Activated CD4-positive, alpha-beta T cell treated with anti-CD3 and anti-CD28 coated beads, Interleukin-2, amount 10 ng/mL, durations not matched to agents 7 days and 5 days (primary cell): ENCODE measurements at regions of chr5 and their contacts with region 1.

Region 1: GRCh38 chr5:14685757-14686156 is 21.2 kb downstream of the OTULIN start:
- DNase-seq: peak; percentile 59
- H3K4me3 Mint-ChIP-seq: no peak overlapping the region
- H3K27ac Mint-ChIP-seq: peak overlapping the region; percentile 52
- H3K4me1 Mint-ChIP-seq: peaks cover 18% of the 10 kb centered on the region
- H3K27me3 Mint-ChIP-seq: no peaks in the 10 kb centered on the region

Region 2: DNA sequence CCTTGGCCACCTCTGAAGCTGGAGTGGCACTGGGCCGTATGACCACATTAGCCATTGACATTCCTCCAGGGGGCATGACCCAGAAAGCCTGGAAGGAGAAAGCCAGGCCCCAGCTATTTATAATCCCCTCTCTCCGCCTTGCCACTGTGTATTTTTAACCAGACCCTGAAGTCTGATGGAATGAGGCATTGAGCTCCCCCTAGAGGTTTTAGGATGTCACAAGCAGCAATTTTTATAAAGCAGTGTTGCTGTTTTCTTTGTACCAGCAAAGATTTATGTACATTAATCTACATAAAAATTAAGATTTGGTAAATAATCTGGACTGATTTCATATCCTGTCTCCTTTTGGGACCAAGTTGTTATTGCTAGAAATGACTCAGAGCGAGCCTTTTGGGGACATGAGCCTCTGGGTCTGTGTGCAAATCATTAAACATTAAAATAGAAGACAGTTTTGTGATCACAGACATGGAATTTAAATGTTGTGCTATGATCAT is 415.5 kb before region 1 on chr5:
- CTCF ChIA-PET with region 1: no interaction called
- POLR2A ChIA-PET with region 1: no interaction called
- DNase-seq: peak; percentile 24
- H3K4me3 Mint-ChIP-seq: no peak overlapping the region
- H3K27ac Mint-ChIP-seq: no peak overlapping the region
- H3K4me1 Mint-ChIP-seq: no peaks in the 10 kb centered on the region
- H3K27me3 Mint-ChIP-seq: peaks cover 10% of the 10 kb centered on the region

Region 3: DNA sequence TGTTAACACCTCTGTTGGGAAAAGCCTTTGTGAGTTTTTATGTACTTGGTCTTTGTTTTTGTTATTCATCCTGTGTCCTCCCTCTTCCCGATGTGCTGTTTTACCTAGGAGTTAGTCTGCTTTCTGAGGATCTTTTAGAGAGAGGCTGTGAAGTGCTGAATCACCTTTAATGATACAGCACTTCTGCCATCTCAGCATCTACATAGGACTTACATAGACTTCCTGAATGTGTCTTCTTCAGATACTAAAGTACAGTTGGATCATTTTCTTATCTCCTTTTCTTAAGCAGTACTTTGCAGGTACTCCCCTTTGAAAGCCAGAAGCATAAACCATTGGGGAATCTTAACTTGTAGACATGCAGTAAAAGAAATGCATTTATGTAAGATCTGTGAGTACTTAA is 10.3 kb after region 1 on chr5:
- CTCF ChIA-PET with region 1: interaction called, 13 read pairs
- POLR2A ChIA-PET with region 1: no interaction called
- DNase-seq: no peak
- H3K4me3 Mint-ChIP-seq: no peak overlapping the region
- H3K27ac Mint-ChIP-seq: peak overlapping the region; percentile 43
- H3K4me1 Mint-ChIP-seq: peaks cover 28% of the 10 kb centered on the region
- H3K27me3 Mint-ChIP-seq: no peaks in the 10 kb centered on the region

Region 4: DNA sequence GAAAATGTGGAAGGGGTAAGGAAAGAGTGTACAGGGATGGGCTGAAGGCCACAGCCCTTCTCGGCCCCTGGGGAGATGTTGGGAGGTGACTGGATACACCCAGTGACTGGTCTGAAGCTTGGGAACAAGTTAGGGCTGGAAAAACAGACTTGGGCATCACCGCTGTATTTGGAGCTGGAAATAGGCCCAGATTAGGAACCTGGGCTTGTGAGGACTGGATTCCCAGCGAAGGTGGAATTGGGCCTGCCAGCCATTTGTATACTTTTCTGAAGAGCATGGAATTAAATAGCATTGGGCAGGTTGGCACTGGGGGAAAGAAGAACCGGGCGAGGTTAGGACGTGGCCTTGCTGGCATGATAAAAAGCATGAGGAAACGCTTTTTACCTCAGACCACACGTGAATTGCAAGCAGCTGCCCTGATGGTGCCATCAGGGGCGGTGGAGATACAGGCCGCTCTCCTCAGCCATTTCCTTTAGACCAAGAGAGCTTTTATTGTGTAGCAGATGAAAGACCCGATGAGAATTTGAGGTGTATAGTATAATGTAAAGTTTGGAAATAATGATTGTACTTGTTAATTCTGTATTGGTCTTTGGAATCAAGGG is 16.6 kb after region 1 on chr5:
- CTCF ChIA-PET with region 1: interaction called, 14 read pairs
- POLR2A ChIA-PET with region 1: interaction called, 3 read pairs
- DNase-seq: no peak
- H3K4me3 Mint-ChIP-seq: no peak overlapping the region
- H3K27ac Mint-ChIP-seq: peak overlapping the region; percentile 66
- H3K4me1 Mint-ChIP-seq: peaks cover 76% of the 10 kb centered on the region
- H3K27me3 Mint-ChIP-seq: no peaks in the 10 kb centered on the region

Region 5: DNA sequence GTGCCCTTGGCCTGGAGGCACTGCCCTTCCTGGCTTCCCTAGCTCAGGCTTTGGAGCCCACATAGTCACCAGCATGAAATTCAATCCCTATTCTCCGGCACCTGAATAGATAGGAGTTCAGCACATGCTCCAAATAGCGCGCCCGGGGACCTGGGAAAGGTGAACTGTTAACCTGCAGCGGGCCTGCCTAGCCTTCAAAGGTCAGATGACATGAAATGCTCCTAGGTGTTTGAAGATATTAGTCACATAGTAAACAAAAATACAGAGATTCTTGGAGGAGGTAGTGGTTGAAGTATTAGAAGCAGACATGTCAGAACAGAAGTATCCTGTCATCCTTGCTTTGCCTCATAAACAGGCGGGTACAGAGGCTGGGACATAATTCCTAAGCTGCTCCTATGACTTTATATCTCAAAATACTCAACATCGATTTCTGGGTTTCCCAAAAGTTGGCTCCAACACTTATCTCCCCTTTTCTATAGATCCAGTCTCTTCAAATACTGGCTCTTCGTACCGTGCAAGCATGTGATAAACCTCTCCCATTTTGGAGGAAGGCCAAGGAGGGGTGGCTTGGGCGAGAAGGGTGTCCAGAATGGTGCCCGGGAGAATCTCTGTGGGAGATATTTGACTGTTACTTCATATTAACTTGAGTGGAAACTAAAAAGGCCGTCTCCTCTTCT is 273.8 kb after region 1 on chr5:
- CTCF ChIA-PET with region 1: no interaction called
- POLR2A ChIA-PET with region 1: interaction called, 13 read pairs
- DNase-seq: no peak
- H3K4me3 Mint-ChIP-seq: no peak overlapping the region
- H3K27ac Mint-ChIP-seq: no peak overlapping the region
- H3K4me1 Mint-ChIP-seq: no peaks in the 10 kb centered on the region
- H3K27me3 Mint-ChIP-seq: no peaks in the 10 kb centered on the region